PC-9 (cell line): ENCODE measurements at regions of chr12 and their contacts with region 1.

Region 1: GRCh38 chr12:64610149-64610678 is at the start of gene RASSF3:
- DNase-seq: peak; percentile 70 to 85
- H3K4me3 ChIP-seq: peak within 1 kb of the TSS; percentile 87
- H3K27ac ChIP-seq: peak within 1 kb of the TSS; percentile 94
- H3K4me1 ChIP-seq: peaks cover 21% of the 10 kb centered on the region
- H3K27me3 ChIP-seq: no peaks in the 10 kb centered on the region
- CTCF ChIP-seq: no peak
- total RNA-seq, gene RASSF3: 32.4 and 38.9 TPM in 2 replicates

Region 2: DNA sequence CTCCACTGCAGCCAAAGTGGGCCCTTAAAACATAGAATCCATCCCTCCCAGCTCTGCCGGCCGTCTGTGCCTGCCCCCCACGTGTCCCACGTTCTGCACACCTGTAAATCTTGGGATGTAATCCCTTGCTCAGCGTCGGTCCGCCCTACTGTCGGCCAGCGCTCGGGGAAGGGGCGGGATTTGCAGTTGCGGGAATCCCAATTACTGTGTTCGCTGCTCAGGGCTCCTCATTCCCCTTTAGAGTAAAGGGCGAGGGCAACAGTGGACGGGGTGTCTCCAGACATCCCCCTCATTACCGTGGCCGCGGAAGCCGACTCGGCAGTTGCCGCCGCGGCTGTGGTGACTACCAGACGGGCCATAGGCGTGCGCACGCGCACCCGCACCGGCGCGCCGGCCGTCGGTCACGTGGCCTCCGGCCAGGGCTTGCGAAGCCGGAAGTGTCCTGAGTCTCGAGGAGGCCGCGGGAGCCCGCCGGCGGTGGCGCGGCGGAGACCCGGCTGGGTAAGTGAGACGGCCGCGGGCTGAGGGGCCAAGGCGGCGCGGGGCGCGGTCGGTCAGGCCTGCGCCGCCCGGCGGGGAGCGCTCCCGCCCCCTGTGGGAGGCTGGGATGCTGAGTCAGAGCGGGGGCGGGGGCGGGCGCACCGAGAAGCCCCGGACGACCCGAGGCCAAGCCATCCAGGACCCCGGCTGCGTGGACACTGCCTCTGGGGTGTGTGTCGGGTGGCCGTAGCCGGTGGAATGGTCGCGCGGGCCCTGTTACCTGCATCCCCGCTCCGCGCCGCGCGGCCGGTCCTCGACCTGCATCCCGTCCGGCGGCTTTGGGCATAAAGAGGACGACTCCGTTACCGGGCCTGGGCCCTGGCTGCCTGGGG is 158.3 kb before region 1 on chr12 and contains the start of gene TBK1:
- CTCF ChIA-PET with region 1: no interaction called
- POLR2A ChIA-PET with region 1: no interaction called
- intact Hi-C with region 1: loop called (anchors 10 kb)
- DNase-seq: peak; percentile 74 to 90
- H3K4me3 ChIP-seq: peak within 1 kb of the TSS; percentile 69
- H3K27ac ChIP-seq: peak within 1 kb of the TSS; percentile 87
- H3K4me1 ChIP-seq: peaks cover 26% of the 10 kb centered on the region
- H3K27me3 ChIP-seq: no peaks in the 10 kb centered on the region
- CTCF ChIP-seq: no peak
- total RNA-seq, gene TBK1: 18.0 and 26.2 TPM in 2 replicates

Region 3: GRCh38 chr12:64544371-64545080 is 65.7 kb before region 1 on chr12:
- CTCF ChIA-PET with region 1: no interaction called
- POLR2A ChIA-PET with region 1: no interaction called
- intact Hi-C with region 1: loop called (anchors 1 kb)
- DNase-seq: no peak
- H3K4me3 ChIP-seq: no peak overlapping the region
- H3K27ac ChIP-seq: no peak overlapping the region
- H3K4me1 ChIP-seq: no peaks in the 10 kb centered on the region
- H3K27me3 ChIP-seq: no peaks in the 10 kb centered on the region
- CTCF ChIP-seq: no peak

Region 4: GRCh38 chr12:64625243-64626077 is 15.2 kb after region 1 on chr12:
- CTCF ChIA-PET with region 1: no interaction called
- POLR2A ChIA-PET with region 1: interaction called, 10 read pairs
- intact Hi-C with region 1: loop called (anchors 1 kb)
- DNase-seq: peak; percentile 72 to 99
- H3K4me3 ChIP-seq: peak overlapping the region; percentile 42
- H3K27ac ChIP-seq: peak overlapping the region; percentile 100
- H3K4me1 ChIP-seq: peaks cover 59% of the 10 kb centered on the region
- H3K27me3 ChIP-seq: no peaks in the 10 kb centered on the region
- CTCF ChIP-seq: no peak

Region 5: DNA sequence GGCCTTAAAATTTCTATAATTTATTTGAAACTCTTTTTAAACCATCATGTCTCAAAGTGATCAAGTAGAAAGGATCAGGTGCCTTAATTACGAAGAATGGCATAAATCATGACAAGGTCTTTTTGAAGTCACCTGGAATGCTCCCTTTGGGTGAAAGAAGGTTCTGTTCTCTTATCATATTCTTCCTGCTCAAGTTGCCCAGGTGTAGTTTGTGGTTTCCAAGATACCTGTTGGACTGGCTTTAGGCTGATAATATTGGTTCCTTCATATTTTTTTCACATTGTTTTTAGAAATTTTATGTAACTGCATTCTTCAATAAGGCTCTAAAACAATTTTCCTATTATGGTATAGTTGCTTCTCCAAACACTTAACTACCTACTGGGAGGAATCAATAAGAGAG is 29.3 kb after region 1 on chr12:
- CTCF ChIA-PET with region 1: no interaction called
- POLR2A ChIA-PET with region 1: interaction called, 5 read pairs
- intact Hi-C with region 1: loop called (anchors 2 kb)
- DNase-seq: peak; percentile 23 to 91
- H3K4me3 ChIP-seq: peak overlapping the region; percentile 10; the same call in 1 of the 2 replicates
- H3K27ac ChIP-seq: peak overlapping the region; percentile 92
- H3K4me1 ChIP-seq: peaks cover 50% of the 10 kb centered on the region
- H3K27me3 ChIP-seq: no peaks in the 10 kb centered on the region
- CTCF ChIP-seq: no peak

Region 6: DNA sequence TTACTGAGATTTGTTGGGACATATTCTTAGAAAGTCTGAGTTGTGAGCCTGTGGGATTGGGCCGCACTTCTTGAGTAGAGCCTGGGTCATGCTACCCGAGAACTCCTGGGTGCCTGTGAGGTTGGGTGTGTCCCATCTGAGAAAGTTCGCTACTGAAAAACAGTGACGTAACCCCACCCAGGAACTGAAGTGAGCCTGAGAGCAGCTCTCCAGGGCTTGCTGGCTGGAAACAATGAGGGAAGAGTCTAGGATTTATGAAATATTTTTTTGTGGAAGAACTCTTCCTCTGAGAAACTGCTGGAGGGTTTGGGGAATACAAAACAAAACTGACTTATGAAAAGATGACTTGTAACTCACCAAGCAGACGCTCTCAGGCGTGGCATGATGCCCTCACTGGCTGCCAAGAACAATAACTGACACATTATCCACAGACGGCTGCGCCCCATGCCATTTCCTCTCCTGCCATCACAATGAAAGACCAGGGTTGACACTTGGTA is 69.3 kb after region 1 on chr12:
- CTCF ChIA-PET with region 1: no interaction called
- POLR2A ChIA-PET with region 1: no interaction called
- intact Hi-C with region 1: loop called (anchors 2 kb)
- DNase-seq: peak; percentile 68 to 83
- H3K4me3 ChIP-seq: peak overlapping the region; percentile 45; the same call in 1 of the 2 replicates
- H3K27ac ChIP-seq: peak overlapping the region; percentile 91
- H3K4me1 ChIP-seq: peaks cover 59% of the 10 kb centered on the region
- H3K27me3 ChIP-seq: no peaks in the 10 kb centered on the region
- CTCF ChIP-seq: no peak

Region 7: GRCh38 chr12:64696080-64696741 is 86.0 kb after region 1 on chr12:
- CTCF ChIA-PET with region 1: interaction called, 3 read pairs
- POLR2A ChIA-PET with region 1: interaction called, 6 read pairs
- intact Hi-C with region 1: loop called (anchors 1 kb)
- DNase-seq: peak in 1 of 2 experiments; percentile 37
- H3K4me3 ChIP-seq: no peak overlapping the region
- H3K27ac ChIP-seq: no peak overlapping the region
- H3K4me1 ChIP-seq: peaks cover 12% of the 10 kb centered on the region
- H3K27me3 ChIP-seq: no peaks in the 10 kb centered on the region
- CTCF ChIP-seq: peak; percentile 72